Adrenal gland (tissue), 19 donors: ENCODE measurements at regions of chr5 and their contacts with region 1.

Region 1: GRCh38 chr5:54254482-54255198 is 55.7 kb downstream of the ARL15 start:
- DNase-seq: peak; percentile 29 to 60 (median 38)
- H3K4me3 ChIP-seq: peak overlapping the region in 1 of 4 donors; percentile 41
- H3K27ac ChIP-seq: peak overlapping the region in 2 of 5 donors; percentile 3 to 52
- H3K4me1 ChIP-seq: peaks cover 0 to 7% of the 10 kb centered on the region in 2 donors
- H3K27me3 ChIP-seq: no peaks in the 10 kb centered on the region
- CTCF ChIP-seq: peak in 5 of 6 experiments; percentile 23 to 50 (median 43)
- POLR2A ChIP-seq: no peak

Region 2: GRCh38 chr5:54090495-54091084 is 164.1 kb before region 1 on chr5:
- intact Hi-C with region 1: no loop called
- DNase-seq: no peak
- H3K4me3 ChIP-seq: no peak overlapping the region
- H3K27ac ChIP-seq: no peak overlapping the region
- H3K4me1 ChIP-seq: no peaks in the 10 kb centered on the region
- H3K27me3 ChIP-seq: no peaks in the 10 kb centered on the region
- CTCF ChIP-seq: peak in 3 of 6 experiments; percentile 13 to 23 (median 15)
- POLR2A ChIP-seq: no peak

Region 3: GRCh38 chr5:54421976-54422375 is 167.3 kb after region 1 on chr5:
- intact Hi-C with region 1: loop called (anchors 5 to 10 kb)
- DNase-seq: no peak
- H3K4me3 ChIP-seq: no peak overlapping the region
- H3K27ac ChIP-seq: no peak overlapping the region
- H3K4me1 ChIP-seq: no peaks in the 10 kb centered on the region
- H3K27me3 ChIP-seq: no peaks in the 10 kb centered on the region
- CTCF ChIP-seq: no peak
- POLR2A ChIP-seq: no peak